CD8-positive, alpha-beta T cell (primary cell): ENCODE measurements at regions of chr12 and their contacts with region 1.

Region 1: DNA sequence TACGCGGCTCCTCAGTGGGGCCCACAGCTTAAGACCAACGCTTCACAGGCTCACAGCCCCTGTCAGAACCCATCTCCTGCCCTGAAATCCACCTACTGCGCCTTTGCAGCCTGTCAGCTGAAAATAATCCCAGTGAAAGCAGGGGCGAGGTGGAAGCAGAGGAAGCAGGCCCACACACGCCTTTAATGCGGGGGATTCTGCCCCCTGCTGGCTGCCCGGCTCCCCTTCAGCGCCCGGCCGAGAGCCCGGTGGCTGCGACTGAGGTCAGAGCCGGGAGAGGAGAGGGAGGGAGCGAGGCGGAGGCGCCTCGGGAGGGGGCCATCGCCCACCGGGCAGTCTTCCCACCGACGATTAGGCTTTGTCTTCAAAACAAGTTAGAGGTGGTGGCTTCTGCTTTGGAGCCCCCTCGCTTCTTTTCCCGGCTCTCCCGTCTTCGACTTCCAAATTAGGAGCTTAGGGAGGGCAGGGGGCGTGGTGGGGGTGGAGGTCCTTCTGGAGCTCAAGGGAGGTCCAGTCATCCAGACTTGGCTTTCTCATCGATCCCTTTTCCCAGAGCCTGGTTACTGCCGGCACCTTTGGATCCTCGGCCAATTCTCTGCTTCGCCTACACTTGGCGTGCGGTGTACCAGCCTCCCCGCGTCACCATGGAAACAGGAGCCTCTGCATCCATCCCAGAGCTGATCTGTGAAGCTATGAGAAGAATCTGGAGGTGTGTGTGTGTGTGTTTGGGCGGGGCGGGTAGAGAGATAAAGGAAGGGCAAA is 25.2 kb upstream of the RND1 start:
- DNase-seq: peak; percentile 55 to 85 (median 73)
- ATAC-seq: peak; percentile 99
- H3K4me3 ChIP-seq: peak overlapping the region in 1 of 2 experiments; percentile 35
- H3K4me3 Mint-ChIP-seq: no peak overlapping the region
- H3K27ac ChIP-seq: no peak overlapping the region
- H3K27ac Mint-ChIP-seq: no peak overlapping the region
- H3K4me1 ChIP-seq: peaks cover 7% of the 10 kb centered on the region
- H3K4me1 Mint-ChIP-seq: peaks cover 3% of the 10 kb centered on the region
- H3K27me3 ChIP-seq: peaks cover 5 to 13% of the 10 kb centered on the region in 2 experiments
- H3K27me3 Mint-ChIP-seq: peaks cover 19% of the 10 kb centered on the region
- CTCF ChIP-seq: peak; percentile 83

Region 2: GRCh38 chr12:47561746-47562145 is 1329.1 kb before region 1 on chr12:
- CTCF ChIA-PET with region 1: no interaction called
- POLR2A ChIA-PET with region 1: no interaction called
- intact Hi-C with region 1: no loop called
- DNase-seq: no peak
- ATAC-seq: no peak
- H3K4me3 ChIP-seq: no peak overlapping the region
- H3K4me3 Mint-ChIP-seq: no peak overlapping the region
- H3K27ac ChIP-seq: no peak overlapping the region
- H3K27ac Mint-ChIP-seq: no peak overlapping the region
- H3K4me1 ChIP-seq: no peaks in the 10 kb centered on the region
- H3K4me1 Mint-ChIP-seq: no peaks in the 10 kb centered on the region
- H3K27me3 ChIP-seq: no peaks in the 10 kb centered on the region
- H3K27me3 Mint-ChIP-seq: no peaks in the 10 kb centered on the region
- CTCF ChIP-seq: no peak

Region 3: GRCh38 chr12:48750769-48751735 is 139.8 kb before region 1 on chr12:
- CTCF ChIA-PET with region 1: interaction called, 3 read pairs
- POLR2A ChIA-PET with region 1: no interaction called
- intact Hi-C with region 1: loop called in 1 of 2 experiments (anchors 5 kb)
- DNase-seq: no peak
- ATAC-seq: no peak
- H3K4me3 ChIP-seq: no peak overlapping the region
- H3K4me3 Mint-ChIP-seq: no peak overlapping the region
- H3K27ac ChIP-seq: no peak overlapping the region
- H3K27ac Mint-ChIP-seq: no peak overlapping the region
- H3K4me1 ChIP-seq: no peaks in the 10 kb centered on the region
- H3K4me1 Mint-ChIP-seq: no peaks in the 10 kb centered on the region
- H3K27me3 ChIP-seq: no peaks in the 10 kb centered on the region
- H3K27me3 Mint-ChIP-seq: no peaks in the 10 kb centered on the region
- CTCF ChIP-seq: no peak

Region 4: GRCh38 chr12:48873096-48873495 is 17.7 kb before region 1 on chr12:
- CTCF ChIA-PET with region 1: interaction called, 40 read pairs
- POLR2A ChIA-PET with region 1: no interaction called
- intact Hi-C with region 1: no loop called
- DNase-seq: no peak
- ATAC-seq: no peak
- H3K4me3 ChIP-seq: no peak overlapping the region
- H3K4me3 Mint-ChIP-seq: no peak overlapping the region
- H3K27ac ChIP-seq: no peak overlapping the region
- H3K27ac Mint-ChIP-seq: no peak overlapping the region
- H3K4me1 ChIP-seq: no peaks in the 10 kb centered on the region
- H3K4me1 Mint-ChIP-seq: no peaks in the 10 kb centered on the region
- H3K27me3 ChIP-seq: no peaks in the 10 kb centered on the region
- H3K27me3 Mint-ChIP-seq: no peaks in the 10 kb centered on the region
- CTCF ChIP-seq: no peak

Region 5: DNA sequence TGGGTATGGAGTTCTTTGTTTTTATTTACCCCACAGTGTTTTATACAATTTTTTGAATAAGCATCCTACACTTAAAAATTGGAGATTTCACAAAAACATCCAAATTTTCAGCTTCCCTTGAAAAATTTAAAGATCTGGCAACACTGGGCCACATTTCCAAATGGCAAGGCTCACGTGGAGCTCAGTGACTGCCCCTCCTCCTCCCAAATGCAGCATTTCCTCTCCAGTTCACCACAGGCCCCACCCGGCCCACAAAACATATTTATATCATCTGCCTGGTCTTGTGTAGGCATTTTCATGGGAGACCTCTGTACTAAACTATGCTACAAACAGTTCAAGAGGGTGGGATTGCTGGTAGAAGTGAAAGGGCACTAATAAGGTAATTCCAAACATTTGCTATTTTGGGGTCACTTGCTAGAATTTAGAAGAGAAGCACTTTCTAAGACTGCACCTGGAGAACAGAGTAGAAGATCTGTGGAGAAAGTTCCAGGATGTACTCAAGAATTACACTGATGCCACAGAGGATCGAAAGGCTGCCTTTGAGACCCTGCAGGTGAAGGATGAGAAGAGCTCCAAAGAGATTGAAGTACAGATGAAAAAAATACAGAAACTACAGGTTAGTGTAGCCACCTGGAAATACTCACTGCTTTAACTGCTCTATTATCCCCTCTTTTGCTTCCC is 27.2 kb after region 1 on chr12:
- CTCF ChIA-PET with region 1: interaction called, 17 read pairs
- POLR2A ChIA-PET with region 1: no interaction called
- intact Hi-C with region 1: no loop called
- DNase-seq: peak in 8 of 9 experiments; percentile 44 to 78 (median 60)
- ATAC-seq: peak; percentile 90
- H3K4me3 ChIP-seq: peak overlapping the region; percentile 48 to 55
- H3K4me3 Mint-ChIP-seq: peak overlapping the region; percentile 90
- H3K27ac ChIP-seq: peak overlapping the region; percentile 34 to 75
- H3K27ac Mint-ChIP-seq: peak overlapping the region; percentile 93
- H3K4me1 ChIP-seq: peaks cover 41% of the 10 kb centered on the region
- H3K4me1 Mint-ChIP-seq: peaks cover 42% of the 10 kb centered on the region
- H3K27me3 ChIP-seq: no peaks in the 10 kb centered on the region
- H3K27me3 Mint-ChIP-seq: no peaks in the 10 kb centered on the region
- CTCF ChIP-seq: no peak

Region 6: DNA sequence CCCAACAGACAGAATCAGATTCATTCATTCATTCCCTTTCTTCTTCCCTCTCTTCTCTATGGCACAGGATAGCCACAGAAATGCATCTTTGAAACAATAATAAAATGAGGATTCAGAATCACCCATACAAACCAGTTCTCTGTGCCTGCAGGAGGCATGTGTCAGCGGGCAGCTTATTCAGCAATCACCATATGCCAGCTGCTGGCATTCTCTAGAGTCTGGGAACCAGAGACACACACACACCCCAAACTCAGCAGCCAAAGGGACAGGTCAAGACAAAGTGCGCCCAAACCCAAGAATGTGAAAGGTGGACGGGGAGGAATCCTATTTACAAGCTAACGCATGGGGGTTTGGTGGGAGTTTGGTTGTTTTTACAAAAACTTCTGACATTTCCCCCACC is 52.4 kb after region 1 on chr12:
- CTCF ChIA-PET with region 1: interaction called, 44 read pairs
- POLR2A ChIA-PET with region 1: no interaction called
- intact Hi-C with region 1: no loop called
- DNase-seq: no peak
- ATAC-seq: no peak
- H3K4me3 ChIP-seq: no peak overlapping the region
- H3K4me3 Mint-ChIP-seq: no peak overlapping the region
- H3K27ac ChIP-seq: no peak overlapping the region
- H3K27ac Mint-ChIP-seq: no peak overlapping the region
- H3K4me1 ChIP-seq: no peaks in the 10 kb centered on the region
- H3K4me1 Mint-ChIP-seq: peaks cover 17% of the 10 kb centered on the region
- H3K27me3 ChIP-seq: no peaks in the 10 kb centered on the region
- H3K27me3 Mint-ChIP-seq: no peaks in the 10 kb centered on the region
- CTCF ChIP-seq: no peak

Region 7: GRCh38 chr12:49366652-49367380 is 476.0 kb after region 1 on chr12:
- CTCF ChIA-PET with region 1: no interaction called
- POLR2A ChIA-PET with region 1: no interaction called
- intact Hi-C with region 1: no loop called
- DNase-seq: peak; percentile 74 to 91 (median 84)
- ATAC-seq: peak; percentile 83
- H3K4me3 ChIP-seq: peak overlapping the region; percentile 91 to 100
- H3K4me3 Mint-ChIP-seq: peak overlapping the region; percentile 96
- H3K27ac ChIP-seq: peak overlapping the region; percentile 79 to 85
- H3K27ac Mint-ChIP-seq: peak overlapping the region; percentile 91
- H3K4me1 ChIP-seq: peaks cover 16% of the 10 kb centered on the region
- H3K4me1 Mint-ChIP-seq: peaks cover 31% of the 10 kb centered on the region
- H3K27me3 ChIP-seq: no peaks in the 10 kb centered on the region
- H3K27me3 Mint-ChIP-seq: no peaks in the 10 kb centered on the region
- CTCF ChIP-seq: no peak